IMR-90 (cell line): ENCODE measurements at regions of chr1 and their contacts with region 1.

Region 1: GRCh38 chr1:54996359-54996868 is 2.3 kb upstream of the BSND start:
- DNase-seq: peak; percentile 47
- ATAC-seq: peak; percentile 89
- H3K4me3 ChIP-seq: no peak overlapping the region
- H3K27ac ChIP-seq: no peak overlapping the region
- H3K4me1 ChIP-seq: no peaks in the 10 kb centered on the region
- H3K27me3 ChIP-seq: peaks cover 76% of the 10 kb centered on the region
- CTCF ChIP-seq: peak; percentile 81
- POLR2A ChIP-seq: no peak
- RAD21 ChIP-seq: peak; percentile 92

Region 2: GRCh38 chr1:54671985-54672608 is 324.3 kb before region 1 on chr1:
- CTCF ChIA-PET with region 1: no interaction called
- POLR2A ChIA-PET with region 1: no interaction called
- dilution Hi-C with region 1: no loop called
- in situ Hi-C with region 1: no loop called
- intact Hi-C with region 1: loop called (anchors 2 kb)
- DNase-seq: peak; percentile 50
- ATAC-seq: peak; percentile 99
- H3K4me3 ChIP-seq: no peak overlapping the region
- H3K27ac ChIP-seq: no peak overlapping the region
- H3K4me1 ChIP-seq: no peaks in the 10 kb centered on the region
- H3K27me3 ChIP-seq: peaks cover 31% of the 10 kb centered on the region
- CTCF ChIP-seq: peak; percentile 93
- POLR2A ChIP-seq: 0 out of 2 replicates have a peak, but pooled peaks have one; percentile 37
- RAD21 ChIP-seq: peak; percentile 93

Region 3: GRCh38 chr1:54810100-54810942 is 186.1 kb before region 1 on chr1:
- CTCF ChIA-PET with region 1: no interaction called
- POLR2A ChIA-PET with region 1: no interaction called
- dilution Hi-C with region 1: no loop called
- in situ Hi-C with region 1: no loop called
- intact Hi-C with region 1: loop called (anchors 5 kb)
- DNase-seq: peak; percentile 37
- ATAC-seq: peak; percentile 99
- H3K4me3 ChIP-seq: no peak overlapping the region
- H3K27ac ChIP-seq: no peak overlapping the region
- H3K4me1 ChIP-seq: no peaks in the 10 kb centered on the region
- H3K27me3 ChIP-seq: peaks cover 32% of the 10 kb centered on the region
- CTCF ChIP-seq: peak; percentile 94
- POLR2A ChIP-seq: peak; percentile 44; the same call in 1 of the 2 replicates
- RAD21 ChIP-seq: peak; percentile 96

Region 4: GRCh38 chr1:54857741-54858627 is 138.4 kb before region 1 on chr1:
- CTCF ChIA-PET with region 1: no interaction called
- POLR2A ChIA-PET with region 1: no interaction called
- dilution Hi-C with region 1: no loop called
- in situ Hi-C with region 1: no loop called
- intact Hi-C with region 1: no loop called
- DNase-seq: peak; percentile 78
- ATAC-seq: peak; percentile 50
- H3K4me3 ChIP-seq: no peak overlapping the region
- H3K27ac ChIP-seq: no peak overlapping the region
- H3K4me1 ChIP-seq: peaks cover 21% of the 10 kb centered on the region
- H3K27me3 ChIP-seq: no peaks in the 10 kb centered on the region
- CTCF ChIP-seq: no peak
- POLR2A ChIP-seq: no peak
- RAD21 ChIP-seq: no peak

Region 5: DNA sequence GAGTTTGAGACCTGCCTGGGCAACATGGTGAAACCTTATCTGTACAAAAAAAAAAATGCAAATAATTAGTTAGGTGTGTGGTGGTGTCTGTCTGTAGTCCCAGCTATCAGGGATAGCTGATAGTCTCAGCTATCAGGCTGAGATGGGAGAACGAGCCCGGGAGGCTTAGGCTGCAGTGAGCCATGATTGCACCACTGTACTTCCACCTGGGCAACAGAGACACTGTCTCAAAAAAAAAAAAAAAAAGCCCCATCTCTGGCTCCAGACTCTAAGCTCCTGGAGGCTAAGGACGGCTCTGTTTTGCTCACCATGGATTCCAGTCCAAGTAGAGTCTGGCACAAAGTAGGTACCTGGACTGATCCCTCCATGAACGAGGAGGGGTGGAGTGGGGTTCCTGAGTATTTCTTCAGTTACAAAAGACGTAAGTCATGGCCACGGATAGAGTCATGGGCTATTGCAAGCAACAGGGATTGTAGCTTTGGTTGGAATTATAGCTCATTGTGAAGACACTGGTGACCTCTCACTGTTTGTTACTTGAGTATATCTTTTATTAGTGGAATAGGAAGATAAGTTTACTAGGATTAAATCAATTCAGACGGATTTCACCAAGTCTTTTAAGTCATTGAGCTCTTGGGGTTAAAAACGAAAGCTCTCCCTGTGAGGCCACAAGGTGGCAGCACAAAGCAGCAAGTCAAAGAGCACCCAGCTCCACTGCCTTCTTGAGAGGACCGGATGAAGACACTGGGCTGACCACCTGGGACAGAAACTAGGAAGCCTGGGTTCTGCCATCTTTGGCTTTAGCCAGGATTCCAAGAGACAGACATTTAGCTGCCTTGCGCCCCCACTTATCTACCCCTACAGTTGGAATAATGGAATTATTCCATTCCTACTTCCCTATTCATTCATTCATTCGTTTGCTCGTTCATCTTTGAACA is 51.5 kb before region 1 on chr1:
- CTCF ChIA-PET with region 1: interaction called, 13 read pairs
- POLR2A ChIA-PET with region 1: no interaction called
- dilution Hi-C with region 1: no loop called
- in situ Hi-C with region 1: loop called (anchors 5 kb)
- intact Hi-C with region 1: loop called (anchors 1 kb)
- DNase-seq: peak; percentile 85
- ATAC-seq: peak; percentile 94
- H3K4me3 ChIP-seq: no peak overlapping the region
- H3K27ac ChIP-seq: no peak overlapping the region
- H3K4me1 ChIP-seq: no peaks in the 10 kb centered on the region
- H3K27me3 ChIP-seq: no peaks in the 10 kb centered on the region; the same call in 1 of the 2 replicates
- CTCF ChIP-seq: peak; percentile 79
- POLR2A ChIP-seq: no peak
- RAD21 ChIP-seq: peak; percentile 80

Region 6: GRCh38 chr1:54950369-54951163 is 45.8 kb before region 1 on chr1:
- CTCF ChIA-PET with region 1: interaction called, 13 read pairs
- POLR2A ChIA-PET with region 1: no interaction called
- dilution Hi-C with region 1: no loop called
- in situ Hi-C with region 1: loop called (anchors 5 kb)
- intact Hi-C with region 1: loop called (anchors 1 kb)
- DNase-seq: peak; percentile 84
- ATAC-seq: peak; percentile 95
- H3K4me3 ChIP-seq: no peak overlapping the region
- H3K27ac ChIP-seq: no peak overlapping the region
- H3K4me1 ChIP-seq: peaks cover 8% of the 10 kb centered on the region
- H3K27me3 ChIP-seq: no peaks in the 10 kb centered on the region; the same call in 1 of the 2 replicates
- CTCF ChIP-seq: peak; percentile 84
- POLR2A ChIP-seq: no peak
- RAD21 ChIP-seq: peak; percentile 76

Region 7: DNA sequence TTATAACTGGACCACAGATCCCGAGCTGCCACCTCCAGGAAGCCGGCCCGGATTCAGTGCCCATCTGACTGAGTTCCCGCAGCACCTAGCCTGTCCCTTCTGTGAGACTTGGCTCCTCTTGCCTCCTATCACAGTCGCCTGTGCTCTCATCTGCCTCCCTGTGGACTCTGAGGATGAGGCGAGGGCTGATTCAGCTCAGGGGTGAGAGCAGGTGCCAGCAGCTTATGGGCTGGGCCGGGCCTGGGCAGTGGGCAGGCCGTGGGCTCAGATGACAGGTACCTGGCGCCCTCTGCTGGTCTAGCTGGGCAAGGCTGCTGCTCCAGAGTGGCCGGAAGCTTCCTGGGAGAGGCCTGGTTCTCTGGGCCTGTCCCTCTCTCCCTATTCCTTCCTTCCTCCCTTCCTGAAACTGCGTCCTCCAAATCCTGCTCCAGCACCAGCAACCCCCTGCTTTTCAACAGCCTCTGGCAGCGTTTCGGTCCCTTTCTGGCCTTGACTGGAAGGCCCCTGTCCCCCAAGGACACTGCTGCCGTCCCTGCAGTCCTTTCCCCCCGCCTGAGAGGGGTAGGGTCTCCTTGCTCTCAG is 25.6 kb after region 1 on chr1:
- CTCF ChIA-PET with region 1: interaction called, 11 read pairs
- POLR2A ChIA-PET with region 1: no interaction called
- dilution Hi-C with region 1: no loop called
- in situ Hi-C with region 1: no loop called
- intact Hi-C with region 1: no loop called
- DNase-seq: peak; percentile 88
- ATAC-seq: peak; percentile 100
- H3K4me3 ChIP-seq: no peak overlapping the region
- H3K27ac ChIP-seq: no peak overlapping the region
- H3K4me1 ChIP-seq: no peaks in the 10 kb centered on the region
- H3K27me3 ChIP-seq: peaks cover 29% of the 10 kb centered on the region
- CTCF ChIP-seq: peak; percentile 97
- POLR2A ChIP-seq: peak; percentile 40; the same call in 1 of the 2 replicates
- RAD21 ChIP-seq: peak; percentile 87